ENCODE measurements at regions of chr1 and their contacts with region 1.

Region 1: DNA sequence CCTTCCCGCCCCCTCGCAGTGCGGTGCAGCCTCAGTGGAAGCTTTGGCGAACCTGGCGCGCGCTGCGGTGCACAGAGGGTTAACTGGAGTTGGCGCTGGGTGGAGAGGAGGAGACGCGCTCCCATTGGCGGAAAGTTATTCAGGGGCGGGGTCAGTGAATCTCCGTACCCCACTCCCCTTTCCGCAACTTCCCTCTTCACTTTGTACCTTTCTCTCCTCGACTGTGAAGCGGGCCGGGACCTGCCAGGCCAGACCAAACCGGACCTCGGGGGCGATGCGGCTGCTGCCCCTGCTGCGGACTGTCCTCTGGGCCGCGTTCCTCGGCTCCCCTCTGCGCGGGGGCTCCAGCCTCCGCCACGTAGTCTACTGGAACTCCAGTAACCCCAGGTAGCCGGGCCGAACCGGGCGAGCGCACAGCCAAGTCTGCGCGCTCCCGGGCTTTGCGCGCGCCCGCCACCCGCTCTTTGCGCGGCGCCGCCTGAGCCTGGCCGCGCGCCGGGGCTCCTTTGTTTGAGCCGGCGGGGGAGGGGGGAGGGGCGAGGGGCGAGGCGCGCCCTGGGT is at the start of gene EFNA4:
- DNase-seq: peak; percentile 88
- H3K4me3 ChIP-seq: peak within 1 kb of the TSS; percentile 63 to 88 (median 78)
- H3K27ac ChIP-seq: peak within 1 kb of the TSS; percentile 37
- H3K4me1 ChIP-seq: peaks cover 23% of the 10 kb centered on the region
- H3K27me3 ChIP-seq: no peaks in the 10 kb centered on the region
- CTCF ChIP-seq: no peak
- total RNA-seq, gene EFNA4: 5.0 to 5.8 TPM

Region 2: GRCh38 chr1:154906621-154907081 is 157.0 kb before region 1 on chr1:
- CTCF ChIA-PET with region 1: no interaction called
- dilution Hi-C with region 1: no loop called
- in situ Hi-C with region 1: no loop called
- intact Hi-C with region 1: loop called (anchors 1 kb)
- DNase-seq: peak; percentile 23
- H3K4me3 ChIP-seq: no peak overlapping the region
- H3K27ac ChIP-seq: no peak overlapping the region
- H3K4me1 ChIP-seq: no peaks in the 10 kb centered on the region
- H3K27me3 ChIP-seq: no peaks in the 10 kb centered on the region
- CTCF ChIP-seq: peak; percentile 50 to 84

Region 3: DNA sequence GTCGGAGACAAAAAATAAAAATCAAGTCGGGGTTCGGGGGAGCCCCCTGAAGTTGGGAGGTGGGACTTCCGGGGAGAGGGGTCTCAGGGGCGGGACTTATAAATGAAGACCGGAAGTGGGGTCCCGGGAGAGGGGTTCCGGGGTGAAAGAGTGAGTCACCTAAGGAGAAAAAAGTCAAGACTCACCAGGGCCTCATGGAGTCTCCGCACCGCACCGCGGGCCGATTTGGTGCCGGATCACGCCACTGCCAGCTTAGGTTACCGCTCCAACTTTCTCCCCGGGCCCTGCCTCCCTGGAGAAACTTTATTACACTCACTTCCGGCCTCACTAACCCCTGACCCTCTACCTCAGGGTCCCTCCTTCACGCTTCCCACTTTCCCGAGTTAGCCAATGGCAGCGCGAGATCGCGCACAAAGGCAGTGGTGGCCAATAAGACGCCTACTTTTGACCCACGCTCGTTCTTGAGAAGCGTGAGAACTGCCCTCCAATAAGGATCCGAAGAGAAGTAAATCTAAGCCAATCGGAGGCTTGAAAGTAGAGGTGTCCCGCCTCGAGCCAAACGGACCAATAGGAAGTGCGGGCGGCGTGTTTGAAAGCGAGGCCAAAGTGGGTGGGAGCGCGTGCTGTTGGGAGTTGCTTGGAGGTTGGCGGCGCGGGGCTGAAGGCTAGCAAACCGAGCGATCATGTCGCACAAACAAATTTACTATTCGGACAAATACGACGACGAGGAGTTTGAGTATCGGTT is 89.4 kb before region 1 on chr1 and contains the start of gene CKS1B:
- CTCF ChIA-PET with region 1: no interaction called
- dilution Hi-C with region 1: no loop called
- in situ Hi-C with region 1: loop called in 1 of 2 experiments (anchors 5 kb)
- intact Hi-C with region 1: no loop called
- DNase-seq: peak; percentile 100
- H3K4me3 ChIP-seq: peak within 1 kb of the TSS; percentile 69 to 73 (median 70)
- H3K27ac ChIP-seq: peak within 1 kb of the TSS; percentile 98
- H3K4me1 ChIP-seq: peaks cover 27% of the 10 kb centered on the region
- H3K27me3 ChIP-seq: no peaks in the 10 kb centered on the region
- CTCF ChIP-seq: no peak
- total RNA-seq, gene CKS1B: 44.2 to 95.6 TPM

Region 4: DNA sequence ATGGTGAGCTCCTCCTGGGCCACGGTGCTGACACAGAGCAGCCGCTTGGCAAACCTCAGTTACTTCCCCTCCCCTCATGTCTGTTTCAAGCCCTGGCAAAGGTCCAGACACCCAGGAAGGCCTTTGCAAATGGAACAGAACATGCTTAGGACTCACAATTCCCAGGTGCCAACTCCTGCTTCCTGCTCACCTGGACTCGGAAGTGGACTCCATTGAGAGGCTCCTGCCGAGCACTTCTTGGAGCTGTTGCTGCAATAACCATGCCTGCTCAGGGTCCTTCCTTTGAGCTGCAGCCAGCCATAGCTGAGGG is 40.7 kb before region 1 on chr1:
- CTCF ChIA-PET with region 1: no interaction called
- dilution Hi-C with region 1: loop called (anchors 5 kb)
- in situ Hi-C with region 1: no loop called
- intact Hi-C with region 1: no loop called
- DNase-seq: no peak
- H3K4me3 ChIP-seq: no peak overlapping the region
- H3K27ac ChIP-seq: no peak overlapping the region
- H3K4me1 ChIP-seq: peaks cover 24% of the 10 kb centered on the region
- H3K27me3 ChIP-seq: no peaks in the 10 kb centered on the region
- CTCF ChIP-seq: no peak

Region 5: GRCh38 chr1:155084722-155085503 is 21.3 kb after region 1 on chr1:
- CTCF ChIA-PET with region 1: interaction called, 3 read pairs
- dilution Hi-C with region 1: no loop called
- in situ Hi-C with region 1: no loop called
- intact Hi-C with region 1: loop called (anchors 1 kb)
- DNase-seq: peak; percentile 90
- H3K4me3 ChIP-seq: peak overlapping the region; percentile 71 to 86 (median 73)
- H3K27ac ChIP-seq: peak overlapping the region; percentile 70
- H3K4me1 ChIP-seq: peaks cover 46% of the 10 kb centered on the region
- H3K27me3 ChIP-seq: peaks cover 20% of the 10 kb centered on the region
- CTCF ChIP-seq: peak; percentile 75 to 89